Aorta (tissue), 5 donors: ENCODE measurements at regions of chr20 and their contacts with region 1.

Region 1: DNA sequence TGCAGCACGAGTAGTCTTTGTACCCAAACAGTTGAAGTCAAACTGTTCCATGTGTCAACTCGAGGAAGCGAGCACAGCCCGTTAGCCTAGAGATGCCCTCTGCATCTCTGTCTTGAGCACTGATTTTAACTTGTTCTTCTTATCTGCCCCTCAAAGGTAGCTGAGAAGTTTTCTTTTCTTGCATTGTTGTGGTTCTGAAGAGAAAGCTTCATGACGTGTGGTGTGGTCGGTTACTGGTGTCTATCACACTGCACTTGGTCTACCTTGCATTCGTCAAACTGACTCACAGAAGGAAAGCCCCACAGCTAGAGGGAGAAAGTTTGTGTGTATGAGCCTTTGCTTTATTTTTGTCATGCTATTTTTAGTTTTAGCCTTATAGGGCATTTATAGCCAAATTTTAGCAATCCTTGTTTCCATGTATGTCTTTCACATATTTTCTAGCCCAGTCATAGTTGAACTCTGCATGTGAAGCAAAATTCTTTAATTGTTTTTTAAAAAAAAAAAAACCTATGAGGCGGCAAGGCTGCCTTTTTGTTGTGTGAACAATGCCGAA is 115.1 kb downstream of the JAG1 start:
- DNase-seq: no peak
- ATAC-seq: peak; percentile 76
- H3K4me3 ChIP-seq: peak overlapping the region; percentile 8 to 69
- H3K27ac ChIP-seq: peak overlapping the region; percentile 82 to 97
- H3K4me1 ChIP-seq: peaks cover 4 to 7% of the 10 kb centered on the region in 2 donors
- H3K27me3 ChIP-seq: no peaks in the 10 kb centered on the region

Region 2: GRCh38 chr20:10521068-10521831 is 37.5 kb before region 1 on chr20:
- intact Hi-C with region 1: no loop called
- DNase-seq: no peak
- ATAC-seq: no peak
- H3K4me3 ChIP-seq: no peak overlapping the region
- H3K27ac ChIP-seq: no peak overlapping the region
- H3K4me1 ChIP-seq: no peaks in the 10 kb centered on the region
- H3K27me3 ChIP-seq: no peaks in the 10 kb centered on the region

Region 3: DNA sequence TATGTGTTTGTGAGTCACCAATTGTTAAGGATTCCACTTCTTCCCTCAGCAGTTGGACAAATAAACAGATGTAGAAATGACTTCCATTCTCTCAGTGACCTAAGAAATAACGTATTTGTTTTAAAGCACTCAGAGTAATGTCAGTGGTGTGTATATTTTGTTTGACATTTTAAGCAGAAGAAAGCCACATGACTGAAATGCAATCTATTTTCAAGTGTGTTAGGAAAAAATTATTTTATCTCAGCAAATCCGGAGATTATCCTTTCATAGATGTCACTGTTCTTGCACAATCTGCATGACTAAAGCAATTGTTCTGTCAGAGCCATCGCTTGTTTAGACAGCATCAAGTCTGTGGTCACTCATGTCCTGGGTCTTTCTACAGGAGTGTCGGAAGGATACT is 38.0 kb after region 1 on chr20:
- intact Hi-C with region 1: loop called in 1 of 2 experiments (anchors 5 kb)
- DNase-seq: no peak
- ATAC-seq: no peak
- H3K4me3 ChIP-seq: no peak overlapping the region
- H3K27ac ChIP-seq: no peak overlapping the region
- H3K4me1 ChIP-seq: peaks cover 0 to 11% of the 10 kb centered on the region in 2 donors
- H3K27me3 ChIP-seq: no peaks in the 10 kb centered on the region

Region 4: GRCh38 chr20:10603971-10604864 is 45.5 kb after region 1 on chr20:
- intact Hi-C with region 1: loop called in 1 of 2 experiments (anchors 1 kb)
- DNase-seq: peak; percentile 77 to 78
- ATAC-seq: peak; percentile 94
- H3K4me3 ChIP-seq: peak overlapping the region in 1 of 2 donors; percentile 54
- H3K27ac ChIP-seq: peak overlapping the region; percentile 100
- H3K4me1 ChIP-seq: peaks cover 3 to 16% of the 10 kb centered on the region in 2 donors
- H3K27me3 ChIP-seq: no peaks in the 10 kb centered on the region

Region 5: DNA sequence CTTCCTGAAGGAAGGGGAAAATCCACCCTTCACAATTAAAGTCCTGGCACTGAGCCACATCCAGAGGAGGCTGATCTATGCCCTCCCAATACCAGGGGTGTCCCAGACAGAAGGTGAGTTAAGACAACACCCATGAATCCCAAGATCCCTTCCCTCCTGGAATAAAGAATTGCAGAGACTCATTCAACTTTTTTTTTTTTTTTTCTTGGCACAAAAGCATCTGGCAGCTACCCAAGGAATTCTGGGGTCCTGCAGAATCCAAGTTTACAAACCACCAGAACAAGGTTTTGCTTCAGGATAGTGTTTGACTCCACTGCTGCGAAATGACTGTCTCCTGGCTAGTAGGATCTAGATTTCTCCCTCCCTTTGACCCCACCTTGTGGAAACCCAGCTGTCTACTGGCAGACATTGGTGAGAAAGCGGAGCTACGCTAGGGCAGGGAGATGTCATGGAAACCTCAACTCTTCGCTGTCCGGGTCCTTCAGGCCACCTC is 77.7 kb after region 1 on chr20:
- intact Hi-C with region 1: loop called (anchors 5 kb)
- DNase-seq: no peak
- ATAC-seq: peak; percentile 20
- H3K4me3 ChIP-seq: no peak overlapping the region
- H3K27ac ChIP-seq: peak overlapping the region; percentile 80 to 100
- H3K4me1 ChIP-seq: peaks cover 8 to 9% of the 10 kb centered on the region in 2 donors
- H3K27me3 ChIP-seq: no peaks in the 10 kb centered on the region

Region 6: GRCh38 chr20:10667077-10667401 is 108.3 kb after region 1 on chr20:
- intact Hi-C with region 1: loop called in 1 of 2 experiments (anchors 5 kb)
- DNase-seq: peak; percentile 88 to 94
- ATAC-seq: peak; percentile 58
- H3K4me3 ChIP-seq: peak overlapping the region in 1 of 2 donors; percentile 7
- H3K27ac ChIP-seq: peak overlapping the region; percentile 62 to 97
- H3K4me1 ChIP-seq: peaks cover 2 to 11% of the 10 kb centered on the region in 2 donors
- H3K27me3 ChIP-seq: no peaks in the 10 kb centered on the region

Region 7: GRCh38 chr20:10919396-10920140 is 360.9 kb after region 1 on chr20:
- intact Hi-C with region 1: loop called (anchors 5 to 10 kb)
- DNase-seq: peak; percentile 79 to 81
- ATAC-seq: peak; percentile 70
- H3K4me3 ChIP-seq: no peak overlapping the region
- H3K27ac ChIP-seq: peak overlapping the region in 1 of 2 donors; percentile 52
- H3K4me1 ChIP-seq: peaks cover 0 to 3% of the 10 kb centered on the region in 2 donors
- H3K27me3 ChIP-seq: no peaks in the 10 kb centered on the region